ENCODE measurements at regions of chr11 and their contacts with region 1.

Region 1: GRCh38 chr11:118171269-118172062 is 5.0 kb downstream of the SCN2B start:
- DNase-seq: peak; percentile 83
- H3K4me3 Mint-ChIP-seq: no peak overlapping the region
- H3K27ac Mint-ChIP-seq: no peak overlapping the region
- H3K4me1 Mint-ChIP-seq: no peaks in the 10 kb centered on the region
- H3K27me3 Mint-ChIP-seq: peaks cover 80% of the 10 kb centered on the region

Region 2: GRCh38 chr11:117900121-117900648 is 271.3 kb before region 1 on chr11:
- CTCF ChIA-PET with region 1: no interaction called
- DNase-seq: no peak
- H3K4me3 Mint-ChIP-seq: no peak overlapping the region
- H3K27ac Mint-ChIP-seq: no peak overlapping the region
- H3K4me1 Mint-ChIP-seq: peaks cover 5% of the 10 kb centered on the region
- H3K27me3 Mint-ChIP-seq: peaks cover 48% of the 10 kb centered on the region

Region 3: DNA sequence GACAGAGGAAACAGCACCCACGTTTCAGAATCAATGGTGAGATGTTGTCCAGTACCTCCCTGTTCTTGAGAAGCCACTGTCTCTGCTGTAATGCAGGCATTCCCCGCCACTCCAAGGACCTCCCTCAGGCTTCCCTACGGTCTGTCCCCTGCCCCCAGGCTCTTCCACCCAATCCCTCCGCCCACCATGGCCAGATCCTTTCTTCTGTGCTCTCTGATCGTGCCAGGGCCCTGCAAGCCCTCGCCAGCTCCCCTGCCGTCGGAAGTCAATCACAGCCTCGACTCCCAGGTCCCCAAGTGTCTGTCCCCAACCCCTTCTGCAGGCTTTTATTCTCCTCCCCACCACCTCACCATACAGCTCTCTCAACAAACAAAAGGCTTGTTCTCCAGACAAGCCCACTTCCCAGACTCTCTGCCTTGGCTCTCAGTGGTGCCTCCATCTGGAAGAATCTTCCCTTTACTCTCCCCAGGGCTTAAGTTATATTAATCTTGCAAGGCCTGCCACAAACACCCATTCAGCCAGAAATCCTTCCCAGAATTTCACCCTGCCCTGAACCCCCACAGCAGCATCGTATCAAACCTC is 32.5 kb before region 1 on chr11:
- CTCF ChIA-PET with region 1: interaction called, 96 read pairs
- DNase-seq: no peak
- H3K4me3 Mint-ChIP-seq: no peak overlapping the region
- H3K27ac Mint-ChIP-seq: no peak overlapping the region
- H3K4me1 Mint-ChIP-seq: no peaks in the 10 kb centered on the region
- H3K27me3 Mint-ChIP-seq: peaks cover 85% of the 10 kb centered on the region

Region 4: DNA sequence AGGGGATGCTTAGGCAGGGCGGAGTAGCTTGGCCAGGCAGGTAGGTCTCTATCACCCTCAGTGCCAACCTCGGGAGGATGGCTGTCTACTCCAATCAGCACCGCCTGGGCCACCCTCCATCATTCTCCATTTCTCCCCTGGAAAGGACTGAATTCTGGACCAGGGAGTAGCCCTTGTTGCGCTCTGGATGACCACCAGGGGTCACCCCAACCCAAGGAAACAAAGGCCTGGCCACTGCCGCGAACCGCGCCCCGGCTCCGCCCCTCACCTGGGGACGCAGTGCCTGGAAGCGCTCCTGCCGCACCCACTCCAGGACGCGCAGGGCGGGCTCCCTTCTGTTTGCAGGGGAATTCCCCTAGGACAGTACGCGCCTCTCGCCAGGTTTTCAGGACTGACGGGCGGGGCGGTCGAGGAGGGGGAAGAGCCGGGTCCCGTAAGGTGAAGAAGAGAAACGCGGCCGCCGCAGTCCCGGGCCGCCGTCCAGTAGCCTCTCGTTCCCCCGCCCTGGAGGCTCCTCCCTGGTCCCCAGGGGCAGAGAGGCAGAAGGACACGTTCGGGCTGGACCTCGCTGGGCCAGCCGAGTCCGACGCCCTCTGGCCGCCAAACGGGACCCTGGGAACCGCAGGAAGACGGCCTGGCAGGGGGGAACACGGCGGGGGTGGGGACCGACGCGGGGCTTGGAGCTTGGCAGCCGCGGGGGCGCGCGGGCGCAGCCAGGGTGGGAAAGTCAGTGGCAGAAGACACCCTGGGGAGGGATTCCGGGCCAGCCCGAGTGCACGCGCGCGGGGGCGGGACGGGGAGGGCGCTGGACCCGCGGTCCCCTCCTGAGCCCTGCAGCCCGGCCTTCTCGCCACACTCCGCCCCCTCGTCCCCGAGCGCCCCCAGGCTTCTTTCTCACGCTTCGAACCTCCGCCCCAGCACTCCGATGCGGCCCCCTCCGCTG is 25.9 kb before region 1 on chr11:
- CTCF ChIA-PET with region 1: interaction called, 96 read pairs
- DNase-seq: peak; percentile 93
- H3K4me3 Mint-ChIP-seq: peak overlapping the region; percentile 75
- H3K27ac Mint-ChIP-seq: no peak overlapping the region
- H3K4me1 Mint-ChIP-seq: peaks cover 4% of the 10 kb centered on the region
- H3K27me3 Mint-ChIP-seq: peaks cover 96% of the 10 kb centered on the region

Region 5: GRCh38 chr11:118152552-118153471 is 18.7 kb before region 1 on chr11 and contains the start of gene SCN4B:
- CTCF ChIA-PET with region 1: interaction called, 37 read pairs
- DNase-seq: peak; percentile 34
- H3K4me3 Mint-ChIP-seq: peak within 1 kb of the TSS; percentile 27
- H3K27ac Mint-ChIP-seq: no peak within 1 kb of the TSS
- H3K4me1 Mint-ChIP-seq: peaks cover 15% of the 10 kb centered on the region
- H3K27me3 Mint-ChIP-seq: peaks cover 100% of the 10 kb centered on the region

Measured in activated naive CD4-positive, alpha-beta T cell treated with anti-CD3 and anti-CD28 coated beads, Interleukin-2, amount 10 ng/mL, durations not matched to agents 7 days and 5 days (primary cell).